ENCODE measurements at regions of chr7 and their contacts with region 1.

Region 1: GRCh38 chr7:101743241-101743994 is 74.0 kb upstream of the CUX1 start:
- DNase-seq: peak; percentile 78
- ATAC-seq: peak; percentile 68
- H3K4me3 Mint-ChIP-seq: peak overlapping the region; percentile 75
- H3K27ac Mint-ChIP-seq: peak overlapping the region; percentile 36
- H3K4me1 Mint-ChIP-seq: peaks cover 67% of the 10 kb centered on the region
- H3K27me3 Mint-ChIP-seq: no peaks in the 10 kb centered on the region

Region 2: DNA sequence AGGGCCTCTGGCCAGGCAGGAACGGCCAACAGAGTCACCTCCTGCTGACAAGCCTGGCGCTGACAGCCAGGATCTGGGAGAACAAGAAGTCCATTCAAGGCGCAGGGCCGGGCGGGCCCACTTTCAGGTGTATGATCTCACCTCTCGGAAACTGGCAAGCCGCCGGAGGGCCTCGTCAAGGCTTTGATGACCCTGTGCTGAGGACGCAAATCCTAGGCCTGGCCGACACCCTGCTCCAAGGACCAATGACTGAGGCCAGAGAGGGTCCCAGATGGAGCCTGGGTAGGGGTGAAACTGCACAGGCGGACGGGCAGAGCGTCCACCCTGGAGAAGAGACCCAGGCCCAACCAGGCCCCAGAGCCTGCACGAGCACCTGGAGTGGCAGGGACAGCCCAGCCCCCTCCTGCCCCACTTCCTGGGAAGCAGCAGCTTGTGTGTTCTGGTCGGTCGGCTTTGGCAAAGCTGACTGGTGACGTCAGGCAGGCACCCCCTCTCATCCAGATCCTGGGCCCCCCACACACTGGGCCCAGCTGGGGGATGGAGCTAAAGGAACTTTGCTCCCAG is 144.9 kb before region 1 on chr7:
- CTCF ChIA-PET with region 1: no interaction called
- POLR2A ChIA-PET with region 1: no interaction called
- DNase-seq: no peak
- ATAC-seq: no peak
- H3K4me3 Mint-ChIP-seq: no peak overlapping the region
- H3K27ac Mint-ChIP-seq: no peak overlapping the region
- H3K4me1 Mint-ChIP-seq: no peaks in the 10 kb centered on the region
- H3K27me3 Mint-ChIP-seq: no peaks in the 10 kb centered on the region

Region 3: DNA sequence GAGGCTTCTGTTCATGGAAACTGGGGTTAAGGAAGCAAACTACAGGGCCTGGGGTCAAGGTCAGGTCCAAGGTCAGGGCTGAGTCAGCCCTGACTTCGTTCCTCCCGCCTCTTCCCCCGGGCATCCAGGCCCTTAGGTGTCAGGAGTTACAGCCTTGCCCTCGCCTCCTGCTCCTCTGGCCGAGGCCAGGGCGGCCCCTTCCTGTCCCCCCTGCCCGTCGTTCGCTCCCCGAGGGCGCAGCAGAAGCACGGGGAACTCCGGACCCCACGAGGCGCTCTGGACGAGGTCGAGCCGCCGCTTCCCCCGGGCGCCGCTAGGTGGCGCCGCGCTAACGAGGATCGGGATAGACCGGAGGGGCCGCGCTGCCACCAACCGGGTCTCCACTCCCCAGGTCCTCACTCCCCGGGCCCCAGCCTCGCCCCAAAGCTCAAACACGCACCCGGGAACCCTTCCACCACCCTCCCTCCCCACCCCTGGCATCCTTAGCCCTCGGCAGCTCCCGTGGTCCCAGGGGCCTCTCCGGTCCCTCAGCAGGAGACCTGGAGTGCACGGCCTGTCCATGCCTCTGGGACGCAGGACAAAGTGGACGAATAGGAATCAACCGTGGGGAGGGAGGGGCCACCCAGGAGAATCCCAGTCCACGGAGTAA is 55.1 kb before region 1 on chr7:
- CTCF ChIA-PET with region 1: interaction called, 18 read pairs
- POLR2A ChIA-PET with region 1: no interaction called
- DNase-seq: peak; percentile 85
- ATAC-seq: peak; percentile 95
- H3K4me3 Mint-ChIP-seq: no peak overlapping the region
- H3K27ac Mint-ChIP-seq: no peak overlapping the region
- H3K4me1 Mint-ChIP-seq: peaks cover 4% of the 10 kb centered on the region
- H3K27me3 Mint-ChIP-seq: no peaks in the 10 kb centered on the region

Region 4: DNA sequence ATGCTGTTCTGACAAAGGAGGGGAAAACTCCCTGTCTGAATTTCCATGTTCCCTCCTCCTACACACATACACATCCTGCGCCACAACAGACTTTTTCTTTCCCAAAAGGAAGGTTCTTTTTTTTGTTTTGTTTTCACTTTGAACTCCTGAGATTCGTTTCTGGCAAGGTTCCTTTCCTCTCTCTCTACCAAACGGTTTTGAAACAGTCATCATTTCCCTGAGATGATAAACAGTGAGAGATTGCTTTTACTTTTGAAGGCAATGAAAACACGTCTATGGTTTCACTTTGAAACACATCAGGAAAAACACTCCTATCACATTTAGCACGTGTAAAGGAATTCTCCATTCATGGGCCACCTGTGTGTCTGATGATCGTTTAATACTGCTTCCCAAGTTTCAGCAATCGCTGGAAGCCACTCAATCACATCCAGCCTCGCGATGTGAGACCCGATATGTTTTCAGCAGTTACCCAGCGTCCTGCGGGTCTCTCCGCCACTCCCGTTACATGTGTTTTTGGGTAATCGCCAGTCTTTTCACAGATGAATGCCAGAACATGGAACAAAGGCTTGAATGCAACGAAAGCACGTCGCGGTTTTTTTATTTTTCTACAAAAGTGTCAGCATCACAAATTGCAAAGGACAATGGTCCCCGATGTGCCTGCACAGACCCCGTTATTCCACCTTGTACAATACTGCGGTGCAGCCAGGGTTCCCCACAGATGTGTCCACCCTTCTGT is 11.2 kb after region 1 on chr7:
- CTCF ChIA-PET with region 1: interaction called, 17 read pairs
- POLR2A ChIA-PET with region 1: interaction called, 4 read pairs
- DNase-seq: peak; percentile 30
- ATAC-seq: no peak
- H3K4me3 Mint-ChIP-seq: peak overlapping the region; percentile 80
- H3K27ac Mint-ChIP-seq: peak overlapping the region; percentile 81
- H3K4me1 Mint-ChIP-seq: peaks cover 15% of the 10 kb centered on the region
- H3K27me3 Mint-ChIP-seq: no peaks in the 10 kb centered on the region

Region 5: DNA sequence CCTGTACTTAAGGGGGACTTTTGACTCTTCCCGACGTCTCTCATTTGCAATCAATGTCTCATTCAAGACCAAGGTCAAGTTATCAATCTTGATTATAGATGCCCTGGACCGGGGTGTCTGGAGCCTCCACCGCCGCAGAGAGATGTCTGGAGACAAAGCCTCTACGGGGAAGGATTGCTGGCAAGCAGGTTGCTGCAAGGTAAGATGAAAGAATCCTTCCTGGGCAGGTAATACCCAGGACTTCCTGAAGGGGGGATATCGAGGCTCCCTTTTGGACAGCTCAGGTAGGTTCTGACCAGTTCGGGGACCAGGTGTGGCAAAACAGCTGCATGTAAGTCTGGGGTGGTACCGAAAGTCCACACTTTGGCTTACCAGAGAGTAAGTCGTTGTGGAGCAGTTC is 61.5 kb after region 1 on chr7:
- CTCF ChIA-PET with region 1: interaction called, 17 read pairs
- POLR2A ChIA-PET with region 1: interaction called, 3 read pairs
- DNase-seq: peak; percentile 30
- ATAC-seq: peak; percentile 71
- H3K4me3 Mint-ChIP-seq: no peak overlapping the region
- H3K27ac Mint-ChIP-seq: no peak overlapping the region
- H3K4me1 Mint-ChIP-seq: peaks cover 15% of the 10 kb centered on the region
- H3K27me3 Mint-ChIP-seq: peaks cover 23% of the 10 kb centered on the region

Region 6: DNA sequence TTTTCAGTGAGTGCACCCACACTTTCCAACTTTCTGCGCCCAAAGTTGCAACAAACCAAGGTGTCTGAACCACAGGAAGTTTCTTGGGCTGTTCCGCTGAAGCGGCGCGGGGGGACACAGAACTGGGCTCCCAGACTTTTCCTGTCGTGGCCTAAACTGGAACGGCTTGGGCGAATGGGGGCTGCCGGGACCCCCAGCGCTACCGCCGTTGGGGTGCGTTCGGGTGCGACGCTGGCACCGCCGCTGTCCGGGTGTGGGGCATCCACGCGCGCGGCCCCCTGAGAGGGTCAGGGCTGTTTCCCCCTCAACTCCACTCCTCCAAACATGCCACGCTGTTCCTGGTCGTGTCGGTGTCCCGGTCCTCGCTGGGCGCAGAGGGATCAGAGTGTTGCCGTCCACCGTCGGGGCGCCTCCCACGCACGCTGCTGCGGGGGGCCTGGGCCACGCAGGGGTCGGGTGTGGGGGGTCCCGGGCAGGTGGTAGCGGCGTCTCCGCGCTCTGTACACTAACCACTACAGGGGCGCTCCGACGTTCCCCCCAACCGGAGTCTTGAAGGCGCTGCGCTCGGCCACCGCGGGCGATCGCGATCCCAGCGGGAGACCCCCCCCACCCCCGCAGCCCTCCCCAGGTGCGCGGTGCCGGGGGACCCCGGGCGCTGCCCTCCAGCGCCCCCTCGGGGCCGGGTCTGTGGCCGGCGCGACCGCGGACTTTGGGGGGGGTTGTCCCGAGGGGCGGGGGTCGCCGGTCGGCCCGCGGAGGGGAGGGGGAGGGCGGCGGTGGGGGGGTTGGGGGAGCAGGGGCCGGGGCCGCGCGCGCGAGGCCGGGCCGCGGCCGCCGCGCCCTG is 71.8 kb after region 1 on chr7:
- CTCF ChIA-PET with region 1: interaction called, 30 read pairs
- POLR2A ChIA-PET with region 1: interaction called, 7 read pairs
- DNase-seq: peak; percentile 66
- ATAC-seq: peak; percentile 35
- H3K4me3 Mint-ChIP-seq: peak overlapping the region; percentile 63
- H3K27ac Mint-ChIP-seq: peak overlapping the region; percentile 23
- H3K4me1 Mint-ChIP-seq: peaks cover 20% of the 10 kb centered on the region
- H3K27me3 Mint-ChIP-seq: peaks cover 12% of the 10 kb centered on the region

Region 7: GRCh38 chr7:101941481-101942383 is 198.3 kb after region 1 on chr7:
- CTCF ChIA-PET with region 1: no interaction called
- POLR2A ChIA-PET with region 1: no interaction called
- DNase-seq: no peak
- ATAC-seq: no peak
- H3K4me3 Mint-ChIP-seq: no peak overlapping the region
- H3K27ac Mint-ChIP-seq: peak overlapping the region; percentile 24
- H3K4me1 Mint-ChIP-seq: no peaks in the 10 kb centered on the region
- H3K27me3 Mint-ChIP-seq: no peaks in the 10 kb centered on the region